Activated CD4-positive, alpha-beta T cell treated with anti-CD3 and anti-CD28 coated beads, Interleukin-2, amount 10 ng/mL, durations not matched to agents 24 days and 14 days (primary cell): ENCODE measurements at regions of chr6 and their contacts with region 1.

Region 1: DNA sequence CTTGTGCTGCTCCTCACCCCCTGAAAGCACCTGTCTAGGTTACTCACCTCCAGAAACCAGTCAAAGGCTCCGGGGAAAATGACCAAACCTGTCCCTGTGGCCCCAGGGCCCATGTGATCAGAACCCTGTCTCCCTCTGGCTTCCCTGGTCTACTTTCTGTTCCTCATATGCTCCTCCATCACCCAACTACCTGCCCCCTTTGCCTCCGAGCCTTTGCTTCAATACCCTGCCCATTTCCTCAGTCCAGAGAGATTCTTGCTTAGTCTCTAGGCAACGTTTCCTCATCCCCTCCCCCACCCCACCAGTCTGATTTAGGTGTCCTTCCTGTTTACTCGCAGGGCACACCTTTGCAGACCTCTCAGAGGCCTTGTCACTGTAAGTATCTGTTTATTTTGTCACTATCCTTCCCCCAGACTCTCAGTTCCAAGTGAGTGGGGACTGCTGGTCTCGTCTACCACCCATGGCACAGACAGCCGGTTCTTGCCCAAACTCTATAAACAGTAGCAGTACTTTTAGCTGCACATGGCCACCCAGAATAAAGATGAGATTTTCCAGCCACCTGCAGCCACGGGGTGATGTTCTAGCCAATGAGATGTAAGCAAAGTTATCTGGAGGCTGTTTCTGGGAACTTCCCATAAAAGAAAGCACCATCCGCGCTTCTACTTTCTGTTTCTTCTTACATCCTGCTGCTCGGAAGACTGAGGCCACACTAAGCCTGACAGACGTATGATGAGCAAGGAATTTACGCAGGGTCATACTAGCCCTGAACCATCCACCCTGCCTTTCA is 13.3 kb downstream of the ELOVL5 start:
- DNase-seq: peak; percentile 92
- H3K4me3 Mint-ChIP-seq: peak overlapping the region; percentile 81
- H3K27ac Mint-ChIP-seq: peak overlapping the region; percentile 97
- H3K4me1 Mint-ChIP-seq: peaks cover 67% of the 10 kb centered on the region
- H3K27me3 Mint-ChIP-seq: no peaks in the 10 kb centered on the region

Region 2: DNA sequence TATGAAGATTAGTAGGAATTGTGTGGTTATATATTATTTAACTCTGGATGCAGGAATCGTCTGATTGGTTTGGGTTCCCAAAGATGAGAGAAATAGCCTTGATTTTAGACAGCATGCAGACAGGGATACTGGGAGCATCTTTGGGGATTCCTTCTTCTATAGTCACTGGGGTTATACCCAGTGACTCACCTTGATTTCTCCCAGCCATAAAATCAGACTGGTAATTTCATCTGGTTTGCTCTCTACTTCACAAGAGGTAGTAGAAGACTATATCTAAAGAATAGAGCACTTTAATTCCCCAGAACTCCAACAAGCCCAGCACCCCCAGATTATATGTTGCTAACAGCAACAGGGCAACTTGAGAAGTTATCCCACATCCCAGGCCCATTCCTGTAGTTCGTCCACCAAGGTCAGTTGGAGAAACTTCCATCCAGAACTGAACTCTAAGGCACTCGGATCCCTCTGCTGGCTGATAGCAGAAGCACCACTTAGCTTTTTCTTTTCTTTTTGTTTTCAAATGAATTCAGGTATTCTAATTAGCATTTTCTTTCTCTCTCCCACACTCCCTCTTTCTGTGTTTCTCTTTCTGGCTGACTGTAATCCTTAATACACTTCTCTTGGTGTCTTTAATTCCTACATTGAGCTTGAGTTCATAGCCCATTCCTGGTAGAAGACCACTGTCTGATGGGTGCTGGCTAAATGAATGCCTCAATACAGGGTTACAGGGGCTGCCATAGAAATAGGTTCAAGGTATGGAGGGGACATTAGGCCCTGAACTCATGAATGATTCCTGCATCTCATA is 935.7 kb before region 1 on chr6:
- intact Hi-C with region 1: loop called (anchors 10 kb)
- DNase-seq: peak; percentile 83
- H3K4me3 Mint-ChIP-seq: no peak overlapping the region
- H3K27ac Mint-ChIP-seq: no peak overlapping the region
- H3K4me1 Mint-ChIP-seq: peaks cover 45% of the 10 kb centered on the region
- H3K27me3 Mint-ChIP-seq: no peaks in the 10 kb centered on the region

Region 3: GRCh38 chr6:53322188-53323029 is 13.0 kb before region 1 on chr6:
- intact Hi-C with region 1: loop called (anchors 1 kb)
- DNase-seq: no peak
- H3K4me3 Mint-ChIP-seq: no peak overlapping the region
- H3K27ac Mint-ChIP-seq: peak overlapping the region; percentile 5
- H3K4me1 Mint-ChIP-seq: peaks cover 48% of the 10 kb centered on the region
- H3K27me3 Mint-ChIP-seq: no peaks in the 10 kb centered on the region

Region 4: GRCh38 chr6:53348371-53349208 is 13.2 kb after region 1 on chr6 and contains the start of gene ELOVL5:
- intact Hi-C with region 1: loop called (anchors 1 kb)
- DNase-seq: peak; percentile 99
- H3K4me3 Mint-ChIP-seq: peak within 1 kb of the TSS; percentile 93
- H3K27ac Mint-ChIP-seq: peak within 1 kb of the TSS; percentile 92
- H3K4me1 Mint-ChIP-seq: peaks cover 40% of the 10 kb centered on the region
- H3K27me3 Mint-ChIP-seq: peaks cover 19% of the 10 kb centered on the region
- total RNA-seq, gene ELOVL5: 122 and 126 TPM in 2 replicates

Region 5: GRCh38 chr6:53359072-53359842 is 23.9 kb after region 1 on chr6:
- intact Hi-C with region 1: loop called (anchors 1 kb)
- DNase-seq: peak; percentile 98
- H3K4me3 Mint-ChIP-seq: peak overlapping the region; percentile 92
- H3K27ac Mint-ChIP-seq: peak overlapping the region; percentile 100
- H3K4me1 Mint-ChIP-seq: peaks cover 39% of the 10 kb centered on the region
- H3K27me3 Mint-ChIP-seq: peaks cover 6% of the 10 kb centered on the region